MCF 10A (cell line): ENCODE measurements at regions of chr13 and their contacts with region 1.

Region 1: DNA sequence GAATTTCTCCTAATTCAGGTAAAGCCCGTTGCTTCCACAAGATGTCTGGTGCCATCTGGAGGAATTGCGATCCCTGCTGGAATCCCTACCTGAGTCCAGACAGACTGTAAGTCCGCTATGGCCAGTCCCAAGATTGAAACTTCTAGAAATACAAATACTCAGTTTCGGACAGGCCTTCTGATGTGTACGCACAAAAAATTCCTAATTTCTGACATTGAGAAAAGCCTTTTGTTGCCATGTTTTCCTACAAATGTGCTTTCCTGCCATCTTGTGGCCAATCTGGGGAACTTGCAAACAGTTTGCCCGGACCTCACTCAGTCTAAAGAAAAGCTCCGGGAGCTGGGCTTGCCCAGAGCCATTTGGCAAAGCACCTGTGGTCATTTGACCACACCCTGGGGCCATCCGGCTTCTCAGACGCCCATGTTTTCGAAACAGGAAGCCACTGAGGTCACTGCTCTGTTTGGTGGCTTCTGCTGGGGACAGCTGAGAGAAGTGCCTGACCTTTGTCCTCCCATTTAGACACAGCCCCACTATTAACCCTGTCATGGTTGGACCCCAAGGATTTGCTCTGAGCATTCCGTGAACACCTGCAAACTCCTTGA is 79.4 kb downstream of the SLC15A1 start:
- DNase-seq: peak; percentile 73
- H3K4me3 Mint-ChIP-seq: no peak overlapping the region
- H3K27ac Mint-ChIP-seq: no peak overlapping the region
- H3K4me1 Mint-ChIP-seq: no peaks in the 10 kb centered on the region
- H3K27me3 Mint-ChIP-seq: peaks cover 18% of the 10 kb centered on the region
- CTCF ChIP-seq: peak; percentile 89

Region 2: GRCh38 chr13:98033277-98034247 is 639.5 kb before region 1 on chr13:
- CTCF ChIA-PET with region 1: interaction called, 6 read pairs
- POLR2A ChIA-PET with region 1: interaction called, 4 read pairs
- intact Hi-C with region 1: loop called (anchors 5 kb)
- DNase-seq: peak; percentile 53
- H3K4me3 Mint-ChIP-seq: no peak overlapping the region
- H3K27ac Mint-ChIP-seq: no peak overlapping the region
- H3K4me1 Mint-ChIP-seq: no peaks in the 10 kb centered on the region
- H3K27me3 Mint-ChIP-seq: no peaks in the 10 kb centered on the region
- CTCF ChIP-seq: peak; percentile 15

Region 3: GRCh38 chr13:98349731-98350305 is 323.2 kb before region 1 on chr13:
- CTCF ChIA-PET with region 1: no interaction called
- POLR2A ChIA-PET with region 1: no interaction called
- intact Hi-C with region 1: loop called (anchors 10 kb)
- DNase-seq: no peak
- H3K4me3 Mint-ChIP-seq: no peak overlapping the region
- H3K27ac Mint-ChIP-seq: no peak overlapping the region
- H3K4me1 Mint-ChIP-seq: no peaks in the 10 kb centered on the region
- H3K27me3 Mint-ChIP-seq: no peaks in the 10 kb centered on the region
- CTCF ChIP-seq: no peak

Region 4: DNA sequence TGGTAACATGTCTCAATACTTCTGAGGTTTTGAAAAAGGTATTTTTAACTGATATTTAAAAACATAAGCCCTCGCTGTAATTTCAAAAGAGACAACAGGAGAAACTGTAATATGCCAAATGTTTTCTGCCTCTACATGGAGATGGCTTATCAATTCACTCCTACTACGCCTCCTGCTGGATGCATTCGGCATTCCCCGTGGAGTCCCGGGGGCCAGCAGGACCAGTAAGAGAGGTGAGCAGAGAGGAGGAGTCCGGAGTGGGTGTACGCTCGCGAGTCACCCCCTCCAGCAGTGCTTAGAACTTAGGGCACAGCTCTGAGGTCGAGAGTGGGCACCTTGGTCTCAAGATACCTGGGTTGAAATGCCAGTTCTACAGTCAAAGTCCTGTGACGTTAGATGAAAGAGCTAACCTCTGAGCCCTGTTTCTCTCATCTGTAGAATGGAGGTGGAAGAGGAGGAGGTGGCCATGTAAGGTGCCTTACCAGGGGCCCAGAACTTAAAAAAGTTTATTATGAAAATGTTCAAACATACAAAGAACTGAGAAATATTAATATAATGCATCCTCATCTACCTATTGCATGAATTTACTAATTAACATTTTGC is 206.3 kb before region 1 on chr13:
- CTCF ChIA-PET with region 1: no interaction called
- POLR2A ChIA-PET with region 1: no interaction called
- intact Hi-C with region 1: loop called (anchors 5 kb)
- DNase-seq: peak; percentile 50
- H3K4me3 Mint-ChIP-seq: no peak overlapping the region
- H3K27ac Mint-ChIP-seq: no peak overlapping the region
- H3K4me1 Mint-ChIP-seq: peaks cover 10% of the 10 kb centered on the region
- H3K27me3 Mint-ChIP-seq: no peaks in the 10 kb centered on the region
- CTCF ChIP-seq: peak; percentile 49

Region 5: DNA sequence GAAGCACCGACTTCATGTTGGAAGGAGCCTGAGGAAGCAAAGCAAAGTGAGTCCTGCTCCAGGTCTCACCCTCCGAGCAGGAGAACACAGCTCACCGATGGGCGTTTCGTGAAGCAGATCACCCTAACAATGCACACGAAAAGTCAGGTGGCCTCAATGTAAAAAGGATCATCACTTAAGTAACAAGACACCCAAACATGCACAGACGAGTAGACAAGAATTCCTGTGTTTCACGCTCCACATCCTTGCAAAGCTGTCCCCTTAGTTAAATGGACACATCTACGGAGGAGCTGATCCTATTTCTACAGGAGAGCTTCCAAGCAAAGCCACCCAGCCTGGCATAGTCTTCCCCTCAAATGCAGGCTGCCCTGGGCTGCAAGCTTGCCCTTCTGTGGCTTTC is 13.2 kb after region 1 on chr13:
- CTCF ChIA-PET with region 1: interaction called, 12 read pairs
- POLR2A ChIA-PET with region 1: no interaction called
- intact Hi-C with region 1: no loop called
- DNase-seq: no peak
- H3K4me3 Mint-ChIP-seq: no peak overlapping the region
- H3K27ac Mint-ChIP-seq: no peak overlapping the region
- H3K4me1 Mint-ChIP-seq: no peaks in the 10 kb centered on the region
- H3K27me3 Mint-ChIP-seq: peaks cover 12% of the 10 kb centered on the region
- CTCF ChIP-seq: no peak

Region 6: GRCh38 chr13:98972627-98973026 is 299.6 kb after region 1 on chr13:
- CTCF ChIA-PET with region 1: no interaction called
- POLR2A ChIA-PET with region 1: no interaction called
- intact Hi-C with region 1: no loop called
- DNase-seq: no peak
- H3K4me3 Mint-ChIP-seq: peak overlapping the region; percentile 16
- H3K27ac Mint-ChIP-seq: peak overlapping the region; percentile 75
- H3K4me1 Mint-ChIP-seq: peaks cover 37% of the 10 kb centered on the region
- H3K27me3 Mint-ChIP-seq: no peaks in the 10 kb centered on the region
- CTCF ChIP-seq: no peak